ENCODE measurements at regions of chr19 and their contacts with region 1.

Region 1: GRCh38 chr19:47112997-47113849 is at the start of gene ZC3H4:
- DNase-seq: peak; percentile 100
- H3K4me3 ChIP-seq: peak within 1 kb of the TSS; percentile 90 to 95
- H3K4me3 Mint-ChIP-seq: peak within 1 kb of the TSS; percentile 97 to 100 (median 98)
- H3K27ac ChIP-seq: peak within 1 kb of the TSS; percentile 98
- H3K27ac Mint-ChIP-seq: peak within 1 kb of the TSS; percentile 99 to 100 (median 100)
- H3K4me1 ChIP-seq: peaks cover 28% of the 10 kb centered on the region
- H3K4me1 Mint-ChIP-seq: peaks cover 17 to 46% (median 28%) of the 10 kb centered on the region in 4 donors
- H3K27me3 ChIP-seq: no peaks in the 10 kb centered on the region
- H3K27me3 Mint-ChIP-seq: no peaks in the 10 kb centered on the region
- total RNA-seq, gene ZC3H4: 74.8 to 75.7 TPM

Region 2: DNA sequence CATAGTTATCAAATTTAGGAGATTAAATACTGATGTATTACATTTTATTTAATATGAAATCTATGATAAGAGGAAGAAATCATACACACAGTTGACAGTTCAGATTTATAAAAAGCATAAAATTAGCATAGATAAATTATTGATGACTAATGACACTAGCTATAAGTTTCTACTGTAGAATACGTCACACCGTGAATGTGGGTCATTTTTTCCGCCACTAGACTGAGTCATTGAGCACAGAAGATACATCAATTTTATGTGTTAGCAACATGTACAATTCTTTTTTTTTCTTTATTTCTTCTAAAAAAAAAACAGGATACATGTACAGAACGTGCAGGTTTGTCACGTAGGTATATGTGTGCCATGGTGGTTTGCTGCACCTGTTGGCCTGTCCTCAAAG is 284.7 kb before region 1 on chr19:
- CTCF ChIA-PET with region 1: no interaction called
- POLR2A ChIA-PET with region 1: no interaction called
- intact Hi-C with region 1: no loop called
- DNase-seq: peak in 1 of 5 donors; percentile 56
- H3K4me3 ChIP-seq: no peak overlapping the region
- H3K4me3 Mint-ChIP-seq: no peak overlapping the region
- H3K27ac ChIP-seq: no peak overlapping the region
- H3K27ac Mint-ChIP-seq: no peak overlapping the region
- H3K4me1 ChIP-seq: no peaks in the 10 kb centered on the region
- H3K4me1 Mint-ChIP-seq: peaks cover 0 to 8% (median 3%) of the 10 kb centered on the region in 4 donors
- H3K27me3 ChIP-seq: no peaks in the 10 kb centered on the region
- H3K27me3 Mint-ChIP-seq: no peaks in the 10 kb centered on the region

Region 3: DNA sequence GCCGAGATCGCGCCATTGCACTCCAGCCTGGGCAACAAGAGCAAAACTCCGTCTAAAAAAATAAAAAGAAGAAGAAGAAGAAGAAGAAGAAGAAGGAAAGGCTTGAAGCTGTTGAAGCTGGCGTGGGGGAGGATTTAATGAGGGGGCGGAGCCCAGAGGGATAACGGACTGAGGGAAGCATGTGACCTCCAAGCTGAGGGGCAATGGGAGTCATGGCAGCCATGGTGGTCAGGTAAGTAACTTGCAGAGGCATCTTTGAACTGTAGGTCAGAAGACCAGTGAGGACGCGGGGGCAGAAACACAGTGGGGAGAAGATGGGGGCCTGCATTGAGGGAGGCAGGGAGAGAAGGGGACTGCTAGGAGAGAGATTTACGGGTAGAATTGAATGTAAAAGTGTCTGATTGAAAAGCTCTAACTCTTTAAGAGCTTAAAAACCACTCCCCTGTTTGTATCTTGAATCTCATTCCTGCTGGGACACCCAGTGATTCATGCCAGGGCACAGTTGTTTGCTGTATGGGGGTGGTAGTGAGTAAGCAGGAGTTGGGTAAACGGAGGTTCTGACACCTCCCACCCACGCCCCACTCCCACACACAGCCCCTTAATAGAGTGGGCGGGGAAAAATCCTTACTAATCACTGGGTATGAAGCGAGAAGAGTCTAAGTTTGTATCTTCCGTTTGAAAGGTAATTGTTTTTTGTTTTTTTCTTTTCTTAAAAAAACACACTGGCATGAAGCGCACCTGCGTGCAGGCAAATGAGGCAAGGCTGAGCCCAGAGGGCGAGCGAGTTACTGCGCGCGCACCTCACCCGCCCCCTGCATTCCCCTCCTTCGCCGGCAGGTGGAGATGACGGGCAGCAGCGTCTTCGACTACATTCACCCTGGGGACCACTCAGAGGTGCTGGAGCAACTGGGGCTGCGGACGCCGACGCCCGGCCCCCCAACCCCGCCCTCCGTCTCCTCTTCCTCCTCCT is 77.8 kb before region 1 on chr19:
- CTCF ChIA-PET with region 1: interaction called, 8 read pairs
- POLR2A ChIA-PET with region 1: interaction called, 13 read pairs
- intact Hi-C with region 1: no loop called
- DNase-seq: peak; percentile 93 to 98 (median 94)
- H3K4me3 ChIP-seq: peak overlapping the region; percentile 36 to 44
- H3K4me3 Mint-ChIP-seq: peak overlapping the region; percentile 84 to 98 (median 88)
- H3K27ac ChIP-seq: no peak overlapping the region
- H3K27ac Mint-ChIP-seq: peak overlapping the region; percentile 73 to 90 (median 87)
- H3K4me1 ChIP-seq: peaks cover 23% of the 10 kb centered on the region
- H3K4me1 Mint-ChIP-seq: peaks cover 11 to 32% (median 21%) of the 10 kb centered on the region in 4 donors
- H3K27me3 ChIP-seq: no peaks in the 10 kb centered on the region
- H3K27me3 Mint-ChIP-seq: peaks cover 5 to 19% of the 10 kb centered on the region in 2 donors

Region 4: GRCh38 chr19:47094557-47095475 is 18.4 kb before region 1 on chr19:
- CTCF ChIA-PET with region 1: interaction called, 35 read pairs
- POLR2A ChIA-PET with region 1: interaction called, 307 read pairs
- intact Hi-C with region 1: loop called (anchors 1 kb)
- DNase-seq: peak in 4 of 5 donors; percentile 33 to 50 (median 45)
- H3K4me3 ChIP-seq: peak overlapping the region in 1 of 2 donors; percentile 21
- H3K4me3 Mint-ChIP-seq: peak overlapping the region; percentile 10 to 82 (median 67)
- H3K27ac ChIP-seq: peak overlapping the region; percentile 77
- H3K27ac Mint-ChIP-seq: peak overlapping the region; percentile 94 to 98 (median 96)
- H3K4me1 ChIP-seq: peaks cover 42% of the 10 kb centered on the region
- H3K4me1 Mint-ChIP-seq: peaks cover 24 to 70% (median 44%) of the 10 kb centered on the region in 4 donors
- H3K27me3 ChIP-seq: no peaks in the 10 kb centered on the region
- H3K27me3 Mint-ChIP-seq: no peaks in the 10 kb centered on the region

Region 5: DNA sequence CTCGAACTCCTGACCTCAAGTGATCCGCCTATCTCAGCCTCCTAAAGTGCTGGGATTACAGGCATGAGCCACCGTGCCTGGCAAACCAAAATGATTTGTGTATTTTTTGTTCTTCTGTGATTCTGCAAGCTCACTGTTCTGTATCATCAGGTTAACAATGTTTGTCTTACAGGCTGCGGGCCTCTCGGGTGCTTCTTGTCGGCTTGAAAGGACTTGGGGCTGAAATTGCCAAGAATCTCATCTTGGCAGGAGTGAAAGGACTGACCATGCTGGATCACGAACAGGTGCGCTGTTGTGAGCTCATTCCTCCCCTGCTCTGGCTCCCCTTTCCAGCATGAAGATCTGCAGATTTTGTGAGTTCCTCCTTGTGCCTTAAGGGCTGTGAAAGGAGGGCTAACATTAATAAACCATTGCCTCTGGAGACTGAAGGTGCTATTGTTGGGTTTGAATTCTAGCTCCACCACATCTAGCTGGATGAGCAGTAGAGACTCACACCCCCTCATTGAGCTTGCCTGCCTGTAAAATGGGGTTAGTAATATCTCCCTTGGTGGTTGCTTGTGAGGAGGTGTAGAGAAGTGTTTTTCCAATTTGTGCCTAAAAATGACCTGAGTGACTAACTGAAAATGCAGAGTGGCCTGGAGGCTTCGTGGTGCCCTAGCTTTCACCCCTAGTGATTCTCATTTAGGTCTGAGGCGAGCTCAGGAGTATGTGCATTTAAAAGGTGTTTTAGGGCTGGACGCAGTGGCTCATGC is 30.3 kb after region 1 on chr19:
- CTCF ChIA-PET with region 1: no interaction called
- POLR2A ChIA-PET with region 1: interaction called, 13 read pairs
- intact Hi-C with region 1: no loop called
- DNase-seq: no peak
- H3K4me3 ChIP-seq: no peak overlapping the region
- H3K4me3 Mint-ChIP-seq: no peak overlapping the region
- H3K27ac ChIP-seq: no peak overlapping the region
- H3K27ac Mint-ChIP-seq: peak overlapping the region; percentile 30 to 87 (median 41)
- H3K4me1 ChIP-seq: peaks cover 37% of the 10 kb centered on the region
- H3K4me1 Mint-ChIP-seq: peaks cover 34 to 68% (median 48%) of the 10 kb centered on the region in 4 donors
- H3K27me3 ChIP-seq: no peaks in the 10 kb centered on the region
- H3K27me3 Mint-ChIP-seq: no peaks in the 10 kb centered on the region

Region 6: GRCh38 chr19:47243776-47244547 is 130.7 kb after region 1 on chr19:
- CTCF ChIA-PET with region 1: interaction called, 10 read pairs
- POLR2A ChIA-PET with region 1: interaction called, 24 read pairs
- intact Hi-C with region 1: no loop called
- DNase-seq: peak; percentile 85 to 91 (median 87)
- H3K4me3 ChIP-seq: peak overlapping the region; percentile 21 to 37
- H3K4me3 Mint-ChIP-seq: peak overlapping the region; percentile 63 to 89 (median 84)
- H3K27ac ChIP-seq: peak overlapping the region; percentile 40
- H3K27ac Mint-ChIP-seq: peak overlapping the region in 6 of 7 donors; percentile 86 to 99 (median 96)
- H3K4me1 ChIP-seq: peaks cover 48% of the 10 kb centered on the region
- H3K4me1 Mint-ChIP-seq: peaks cover 11 to 33% (median 22%) of the 10 kb centered on the region in 4 donors
- H3K27me3 ChIP-seq: no peaks in the 10 kb centered on the region
- H3K27me3 Mint-ChIP-seq: no peaks in the 10 kb centered on the region